Mammary epithelial cell (primary cell): ENCODE measurements at regions of chr11 and their contacts with region 1.

Region 1: DNA sequence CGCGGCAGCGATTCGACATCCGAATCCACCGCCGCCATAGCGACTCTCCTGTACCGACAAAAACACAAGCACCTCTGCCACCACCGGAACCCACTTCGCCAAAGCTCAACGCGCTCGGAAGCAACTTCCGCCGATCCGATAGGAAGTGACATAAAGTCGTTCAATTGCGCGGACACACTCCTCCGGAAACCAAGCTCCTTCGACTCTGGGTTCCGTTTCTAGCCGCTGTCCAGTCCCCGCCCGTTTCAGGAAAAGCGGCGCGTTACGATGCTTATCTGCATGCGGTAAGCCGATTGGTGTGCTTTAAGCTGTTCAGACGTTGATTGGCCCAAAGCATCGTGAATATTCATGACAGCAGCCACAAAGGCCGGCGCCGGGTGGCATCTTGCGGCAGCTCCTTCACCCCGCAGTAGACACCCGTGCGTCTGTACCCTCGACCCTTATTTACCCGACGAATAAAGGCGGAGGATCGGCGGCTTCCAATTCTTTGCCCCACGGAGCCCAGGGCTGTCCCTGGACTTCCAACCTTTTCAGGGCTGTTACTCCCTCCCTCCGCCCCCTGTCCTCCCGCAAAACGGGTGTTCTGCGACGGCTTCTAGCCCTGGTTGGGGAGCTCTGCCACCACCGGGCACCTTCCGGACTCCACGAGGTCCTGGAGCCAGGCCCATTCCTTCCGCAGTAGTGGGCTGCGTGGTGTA is at the start of gene TUT1:
- DNase-seq: peak; percentile 99
- H3K4me3 ChIP-seq: peak within 1 kb of the TSS; percentile 52 to 94 (median 81)
- H3K27ac ChIP-seq: peak within 1 kb of the TSS; percentile 85
- H3K4me1 ChIP-seq: peaks cover 18% of the 10 kb centered on the region
- H3K27me3 ChIP-seq: no peaks in the 10 kb centered on the region
- CTCF ChIP-seq: no peak
- total RNA-seq, gene TUT1: 7.8 to 18.5 TPM

Region 2: GRCh38 chr11:62143727-62144126 is 447.9 kb before region 1 on chr11:
- CTCF ChIA-PET with region 1: no interaction called
- dilution Hi-C with region 1: no loop called
- in situ Hi-C with region 1: no loop called
- intact Hi-C with region 1: no loop called
- DNase-seq: no peak
- H3K4me3 ChIP-seq: no peak overlapping the region
- H3K27ac ChIP-seq: no peak overlapping the region
- H3K4me1 ChIP-seq: no peaks in the 10 kb centered on the region
- H3K27me3 ChIP-seq: no peaks in the 10 kb centered on the region
- CTCF ChIP-seq: no peak

Region 3: DNA sequence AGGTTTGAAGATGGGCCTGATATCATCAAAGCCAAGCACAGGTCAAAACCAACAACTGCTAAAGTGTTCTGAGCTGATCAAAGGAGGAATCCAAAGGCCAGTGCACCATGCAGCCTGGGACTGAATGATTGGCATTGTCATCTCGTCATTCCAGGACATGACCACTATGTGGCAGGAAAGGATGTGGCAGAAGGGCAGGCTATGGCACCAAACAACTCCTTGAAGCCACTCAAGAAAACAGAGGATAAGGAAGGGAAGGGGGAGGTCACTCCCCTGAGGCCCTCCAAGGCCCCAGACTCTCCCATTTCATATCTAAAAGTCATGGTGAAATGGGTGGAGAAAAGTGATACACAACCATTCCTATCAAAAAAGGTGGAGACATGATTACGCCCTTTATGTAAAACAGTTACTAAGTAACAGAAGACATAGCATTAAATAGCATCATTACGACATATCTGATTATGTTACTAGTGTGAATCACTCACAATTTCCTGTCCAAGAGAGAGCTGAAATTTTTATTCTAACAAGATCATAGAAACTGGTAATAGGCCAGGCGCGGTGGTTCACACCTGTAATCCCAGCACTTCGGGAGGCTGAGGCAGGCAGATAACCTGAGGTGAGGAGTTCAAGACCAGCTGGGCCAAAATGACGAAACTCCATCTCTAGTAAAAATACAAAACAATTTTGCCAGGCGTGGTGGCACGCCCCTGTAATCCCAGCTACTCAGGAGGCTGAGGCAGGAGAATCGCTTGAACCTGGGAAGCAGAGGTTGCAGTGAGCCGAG is 94.3 kb before region 1 on chr11:
- CTCF ChIA-PET with region 1: no interaction called
- dilution Hi-C with region 1: no loop called
- in situ Hi-C with region 1: no loop called
- intact Hi-C with region 1: no loop called
- DNase-seq: peak; percentile 84
- H3K4me3 ChIP-seq: no peak overlapping the region
- H3K27ac ChIP-seq: peak overlapping the region; percentile 66
- H3K4me1 ChIP-seq: peaks cover 35% of the 10 kb centered on the region
- H3K27me3 ChIP-seq: no peaks in the 10 kb centered on the region
- CTCF ChIP-seq: peak; percentile 44 to 63

Region 4: DNA sequence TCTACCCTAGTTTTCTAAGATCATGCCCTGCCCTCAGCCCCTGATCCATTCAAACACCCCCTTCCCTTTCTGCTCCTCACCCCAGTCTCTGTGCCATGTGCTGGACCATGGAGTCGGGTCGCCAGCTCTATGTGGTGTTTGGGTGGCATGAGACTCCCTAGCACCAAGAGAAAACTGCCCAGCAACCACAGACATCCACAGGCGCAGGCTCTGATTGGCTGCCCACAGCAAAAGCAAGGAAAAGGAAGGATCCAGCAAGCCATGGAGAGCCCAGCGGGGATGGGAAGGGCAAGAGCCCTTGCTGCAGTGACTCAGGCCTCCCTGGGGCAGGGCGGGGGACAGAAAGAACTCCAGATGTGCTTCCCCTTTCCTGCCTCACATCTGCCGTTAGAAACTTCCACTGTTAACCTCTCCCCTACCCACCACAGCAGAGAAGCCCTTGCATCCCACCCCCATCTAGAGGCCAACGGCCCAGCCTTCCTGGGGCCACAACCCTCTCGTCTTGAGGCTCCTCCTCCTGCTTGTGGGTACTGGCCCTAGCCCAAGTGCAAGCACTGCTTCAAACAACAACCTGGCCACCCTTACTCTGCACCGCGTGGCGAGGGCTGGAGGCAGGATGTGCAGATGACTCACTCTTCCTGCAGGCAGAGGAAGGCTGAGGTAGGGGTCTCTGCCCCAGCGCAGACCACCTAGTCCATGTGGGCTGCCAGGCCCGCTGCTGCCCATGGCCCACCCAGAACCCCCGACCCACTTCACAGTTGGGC is 35.3 kb before region 1 on chr11:
- CTCF ChIA-PET with region 1: interaction called, 3 read pairs
- dilution Hi-C with region 1: loop called (anchors 5 kb)
- in situ Hi-C with region 1: no loop called
- intact Hi-C with region 1: loop called (anchors 1 kb)
- DNase-seq: peak; percentile 96
- H3K4me3 ChIP-seq: peak overlapping the region; percentile 1 to 20 (median 8)
- H3K27ac ChIP-seq: peak overlapping the region; percentile 67
- H3K4me1 ChIP-seq: peaks cover 99% of the 10 kb centered on the region
- H3K27me3 ChIP-seq: no peaks in the 10 kb centered on the region
- CTCF ChIP-seq: no peak

Region 5: DNA sequence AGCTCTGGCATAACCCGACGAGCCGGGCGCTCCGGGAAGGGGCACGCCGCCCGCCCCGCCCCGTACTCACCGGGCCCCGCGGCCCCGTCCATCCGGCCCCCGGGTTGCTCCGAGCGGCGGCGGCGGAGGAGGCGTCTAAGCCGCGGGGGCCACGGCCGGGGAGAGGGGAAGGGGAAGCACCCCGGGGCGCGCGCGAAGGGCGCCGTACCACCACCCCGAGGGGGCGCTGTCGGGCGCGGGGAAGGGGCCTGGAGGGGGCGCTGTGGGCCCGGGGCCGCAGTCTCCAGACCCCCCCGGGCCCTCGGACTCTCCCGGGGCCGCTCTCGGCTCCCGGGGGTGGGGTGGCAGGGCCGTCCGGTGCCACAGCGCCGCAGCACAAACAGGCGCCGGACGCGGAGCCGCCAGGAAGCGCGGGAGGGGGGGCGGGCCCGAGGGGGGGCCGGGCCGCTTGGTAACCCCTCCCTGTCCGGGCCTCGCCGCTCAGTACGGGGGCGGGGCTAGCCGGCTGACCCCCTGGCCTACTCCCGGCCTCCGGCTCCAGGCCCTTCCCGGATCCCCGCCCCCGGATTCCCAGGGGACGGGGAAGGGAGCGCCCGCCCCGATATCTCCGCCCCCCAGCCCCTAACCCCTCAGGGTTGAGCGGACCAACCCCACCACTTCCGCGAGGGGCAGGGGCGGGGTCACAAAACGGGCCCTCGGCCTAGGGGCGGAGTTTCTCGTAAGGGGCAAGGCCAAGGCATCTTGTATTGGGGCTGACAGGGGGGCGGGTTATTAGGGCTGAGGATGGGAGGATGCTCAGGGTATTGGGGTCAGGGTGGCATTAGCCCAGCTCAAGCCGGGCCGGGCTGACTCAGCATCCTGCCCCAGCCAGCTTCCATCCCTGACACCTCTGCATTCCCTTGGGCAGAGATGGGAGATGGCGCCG is 21.0 kb after region 1 on chr11 and contains the starts of genes EML3 and ROM1:
- CTCF ChIA-PET with region 1: interaction called, 5 read pairs
- dilution Hi-C with region 1: no loop called
- in situ Hi-C with region 1: no loop called
- intact Hi-C with region 1: loop called (anchors 2 kb)
- DNase-seq: peak; percentile 75
- H3K4me3 ChIP-seq: peak within 1 kb of the TSS; percentile 72 to 84 (median 76)
- H3K27ac ChIP-seq: peak within 1 kb of the TSS; percentile 56
- H3K4me1 ChIP-seq: peaks cover 33% of the 10 kb centered on the region
- H3K27me3 ChIP-seq: no peaks in the 10 kb centered on the region
- CTCF ChIP-seq: peak; percentile 38 to 88
- total RNA-seq, gene EML3: 21.0 to 46.6 TPM
- total RNA-seq, gene ROM1: 2.3 TPM

Region 6: GRCh38 chr11:62627714-62628113 is 36.1 kb after region 1 on chr11:
- CTCF ChIA-PET with region 1: no interaction called
- dilution Hi-C with region 1: no loop called
- in situ Hi-C with region 1: no loop called
- intact Hi-C with region 1: loop called (anchors 1 kb)
- DNase-seq: no peak
- H3K4me3 ChIP-seq: no peak overlapping the region
- H3K27ac ChIP-seq: no peak overlapping the region
- H3K4me1 ChIP-seq: no peaks in the 10 kb centered on the region
- H3K27me3 ChIP-seq: no peaks in the 10 kb centered on the region
- CTCF ChIP-seq: peak in 1 of 2 donors; percentile 23

Region 7: GRCh38 chr11:62665075-62665598 is 73.5 kb after region 1 on chr11 and contains the starts of genes C11orf98 and CSKMT:
- CTCF ChIA-PET with region 1: interaction called, 4 read pairs
- dilution Hi-C with region 1: loop called (anchors 10 kb)
- in situ Hi-C with region 1: loop called in 1 of 2 experiments (anchors 5 kb)
- intact Hi-C with region 1: loop called (anchors 2 kb)
- DNase-seq: peak; percentile 91
- H3K4me3 ChIP-seq: peak within 1 kb of the TSS; percentile 58 to 96 (median 83)
- H3K27ac ChIP-seq: peak within 1 kb of the TSS; percentile 65
- H3K4me1 ChIP-seq: peaks cover 15% of the 10 kb centered on the region
- H3K27me3 ChIP-seq: no peaks in the 10 kb centered on the region
- CTCF ChIP-seq: no peak
- total RNA-seq, gene C11orf98: 18.0 to 68.3 TPM
- total RNA-seq, gene CSKMT: 2.2 to 18.2 TPM

Region 8: GRCh38 chr11:62694455-62695167 is 103.0 kb after region 1 on chr11:
- CTCF ChIA-PET with region 1: no interaction called
- dilution Hi-C with region 1: no loop called
- in situ Hi-C with region 1: no loop called
- intact Hi-C with region 1: loop called (anchors 1 kb)
- DNase-seq: peak; percentile 52
- H3K4me3 ChIP-seq: no peak overlapping the region
- H3K27ac ChIP-seq: no peak overlapping the region
- H3K4me1 ChIP-seq: no peaks in the 10 kb centered on the region
- H3K27me3 ChIP-seq: no peaks in the 10 kb centered on the region
- CTCF ChIP-seq: peak; percentile 79 to 87

Region 9: DNA sequence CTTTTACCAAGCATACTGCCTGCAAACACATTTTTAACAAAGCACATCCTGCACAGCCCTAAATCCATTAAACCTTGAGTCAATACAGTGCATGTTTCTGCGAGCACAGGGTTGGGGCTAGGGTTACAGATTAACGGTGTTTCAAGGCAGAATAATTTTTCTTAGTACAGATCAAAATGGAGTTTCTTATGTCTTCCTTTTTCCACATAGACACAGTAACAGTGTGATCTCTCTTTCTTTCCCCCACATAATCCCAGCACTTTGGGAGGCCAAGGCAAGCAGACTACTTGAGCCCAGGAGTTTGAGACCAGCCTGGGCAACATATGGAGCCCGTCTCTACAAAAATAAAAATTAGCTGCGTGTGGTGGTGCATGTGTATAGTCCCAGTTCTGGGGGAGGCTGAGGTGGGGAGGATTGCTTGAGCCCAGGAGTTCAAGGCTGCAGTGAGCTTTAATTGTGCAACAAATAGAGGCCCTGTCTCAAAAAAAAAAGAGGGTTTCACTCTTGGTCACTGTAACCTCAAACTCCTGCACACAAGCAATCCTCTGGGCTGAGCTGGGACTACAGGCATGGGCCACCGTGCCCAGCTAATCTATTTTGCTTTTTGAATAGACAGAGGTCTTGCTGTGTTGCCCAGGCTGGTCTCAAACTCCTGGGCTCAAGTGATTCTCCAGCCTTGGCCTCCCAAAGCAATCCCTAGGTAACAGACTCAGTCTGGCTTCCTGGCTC is 269.4 kb after region 1 on chr11:
- CTCF ChIA-PET with region 1: no interaction called
- dilution Hi-C with region 1: no loop called
- in situ Hi-C with region 1: no loop called
- intact Hi-C with region 1: loop called (anchors 5 kb)
- DNase-seq: no peak
- H3K4me3 ChIP-seq: no peak overlapping the region
- H3K27ac ChIP-seq: no peak overlapping the region
- H3K4me1 ChIP-seq: peaks cover 7% of the 10 kb centered on the region
- H3K27me3 ChIP-seq: no peaks in the 10 kb centered on the region
- CTCF ChIP-seq: no peak

Region 10: GRCh38 chr11:62974848-62975522 is 383.4 kb after region 1 on chr11:
- CTCF ChIA-PET with region 1: no interaction called
- dilution Hi-C with region 1: no loop called
- in situ Hi-C with region 1: no loop called
- intact Hi-C with region 1: no loop called
- DNase-seq: no peak
- H3K4me3 ChIP-seq: no peak overlapping the region
- H3K27ac ChIP-seq: no peak overlapping the region
- H3K4me1 ChIP-seq: no peaks in the 10 kb centered on the region
- H3K27me3 ChIP-seq: no peaks in the 10 kb centered on the region
- CTCF ChIP-seq: peak; percentile 33 to 44